Ascending aorta (tissue), 2 donors: ENCODE measurements at regions of chr2 and their contacts with region 1.

Region 1: DNA sequence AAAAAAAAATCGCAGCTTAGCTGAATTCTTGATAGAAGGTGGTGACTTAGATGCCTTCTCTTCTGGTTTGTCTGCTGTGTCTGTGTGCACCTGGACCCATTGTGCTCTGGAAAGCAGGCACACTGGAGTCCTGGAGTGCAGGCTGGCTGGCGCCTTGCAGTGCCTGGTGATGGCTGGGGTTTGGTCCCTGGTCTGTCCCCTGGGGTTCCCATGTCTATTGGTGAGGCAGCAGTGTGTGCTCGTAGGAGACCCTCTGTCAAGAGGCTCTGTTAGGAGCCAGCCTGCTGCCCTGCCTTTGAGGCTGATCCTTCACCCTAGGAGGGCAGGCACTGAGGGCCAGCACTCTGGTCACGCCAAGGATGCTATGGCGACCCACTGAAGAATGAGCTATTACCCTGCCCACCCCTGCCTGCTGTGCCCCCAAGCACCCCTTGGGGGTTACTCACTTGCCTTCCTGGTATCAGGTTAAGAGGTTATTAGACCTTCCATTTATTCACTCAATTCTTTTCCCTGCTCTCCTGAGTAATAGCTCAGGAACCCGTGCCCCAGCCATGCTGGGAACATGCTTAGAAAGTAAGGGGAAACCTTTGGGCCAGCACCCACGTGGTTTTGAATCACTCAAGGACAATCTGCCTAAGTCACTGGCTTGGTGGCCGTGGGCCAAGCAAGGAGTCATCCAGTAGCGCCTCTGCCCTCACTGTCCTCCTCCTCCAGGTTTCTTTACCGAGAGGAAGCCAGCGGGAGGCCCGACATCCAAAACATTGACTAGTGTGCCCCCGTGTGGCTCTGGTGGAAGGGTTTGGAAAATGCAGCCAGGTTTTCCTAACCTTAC is 284.5 kb downstream of the PRKCE start:
- DNase-seq: peak; percentile 89 to 98
- H3K4me3 ChIP-seq: no peak overlapping the region
- H3K27ac ChIP-seq: no peak overlapping the region
- H3K4me1 ChIP-seq: peaks cover 4 to 10% of the 10 kb centered on the region in 2 donors
- H3K27me3 ChIP-seq: no peaks in the 10 kb centered on the region
- CTCF ChIP-seq: peak; percentile 67 to 83 (median 77)

Region 2: DNA sequence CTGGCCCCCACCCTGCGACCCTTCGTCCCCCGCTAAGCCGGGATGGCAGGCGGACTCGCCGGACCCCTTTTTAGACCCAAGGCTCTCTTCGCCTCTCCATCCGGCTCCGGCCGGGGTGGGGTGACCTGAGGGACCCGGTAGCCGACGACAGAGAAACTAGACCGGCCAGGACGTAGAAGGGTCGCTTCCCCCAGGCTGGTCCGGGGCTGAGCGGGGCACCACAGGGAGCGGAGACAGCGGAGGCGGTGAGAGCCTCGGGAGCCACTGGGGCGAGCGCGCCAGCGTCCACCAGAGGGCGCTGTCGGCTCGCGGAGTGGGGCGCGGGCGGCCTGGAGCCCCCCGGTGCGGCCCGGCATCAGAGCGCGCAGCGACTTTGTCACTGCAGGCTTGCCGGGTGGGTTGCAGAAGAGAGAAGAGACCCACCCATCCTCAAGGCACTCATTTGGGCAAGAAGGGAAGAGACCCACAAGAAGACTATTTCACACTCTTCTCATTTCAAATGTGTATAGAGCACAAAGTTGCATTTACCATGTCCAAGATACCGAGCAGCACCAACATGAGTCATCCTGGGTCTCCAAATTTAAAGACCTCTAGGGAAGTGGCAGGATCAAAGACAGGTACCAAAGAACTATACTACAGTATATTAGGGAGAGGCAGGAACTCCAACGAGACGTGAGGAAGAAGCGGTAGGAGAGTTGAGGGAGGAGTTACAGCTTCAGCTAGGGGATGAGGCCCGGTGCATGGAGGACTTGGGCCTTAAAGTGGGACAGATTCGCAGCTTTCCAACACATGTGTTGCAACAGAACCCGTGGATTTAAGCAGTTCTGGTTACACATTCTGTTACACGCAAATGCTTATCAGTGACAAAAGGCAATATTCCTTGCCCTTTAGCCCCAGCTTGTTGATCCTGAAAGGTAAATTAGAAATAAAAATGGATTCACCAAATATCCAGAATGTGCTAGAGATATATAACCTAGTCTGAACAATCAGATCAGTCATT is 292.2 kb before region 1 on chr2:
- intact Hi-C with region 1: loop called (anchors 1 kb)
- DNase-seq: peak in 1 of 2 donors; percentile 76
- H3K4me3 ChIP-seq: peak overlapping the region; percentile 57 to 63
- H3K27ac ChIP-seq: no peak overlapping the region
- H3K4me1 ChIP-seq: peaks cover 0 to 3% of the 10 kb centered on the region in 2 donors
- H3K27me3 ChIP-seq: no peaks in the 10 kb centered on the region
- CTCF ChIP-seq: peak; percentile 94 to 100 (median 98)

Region 3: GRCh38 chr2:45778720-45779171 is 157.3 kb before region 1 on chr2:
- intact Hi-C with region 1: loop called (anchors 2 kb)
- DNase-seq: peak in 1 of 2 donors; percentile 74
- H3K4me3 ChIP-seq: no peak overlapping the region
- H3K27ac ChIP-seq: no peak overlapping the region
- H3K4me1 ChIP-seq: no peaks in the 10 kb centered on the region
- H3K27me3 ChIP-seq: no peaks in the 10 kb centered on the region
- CTCF ChIP-seq: peak; percentile 53 to 85 (median 76)

Region 4: DNA sequence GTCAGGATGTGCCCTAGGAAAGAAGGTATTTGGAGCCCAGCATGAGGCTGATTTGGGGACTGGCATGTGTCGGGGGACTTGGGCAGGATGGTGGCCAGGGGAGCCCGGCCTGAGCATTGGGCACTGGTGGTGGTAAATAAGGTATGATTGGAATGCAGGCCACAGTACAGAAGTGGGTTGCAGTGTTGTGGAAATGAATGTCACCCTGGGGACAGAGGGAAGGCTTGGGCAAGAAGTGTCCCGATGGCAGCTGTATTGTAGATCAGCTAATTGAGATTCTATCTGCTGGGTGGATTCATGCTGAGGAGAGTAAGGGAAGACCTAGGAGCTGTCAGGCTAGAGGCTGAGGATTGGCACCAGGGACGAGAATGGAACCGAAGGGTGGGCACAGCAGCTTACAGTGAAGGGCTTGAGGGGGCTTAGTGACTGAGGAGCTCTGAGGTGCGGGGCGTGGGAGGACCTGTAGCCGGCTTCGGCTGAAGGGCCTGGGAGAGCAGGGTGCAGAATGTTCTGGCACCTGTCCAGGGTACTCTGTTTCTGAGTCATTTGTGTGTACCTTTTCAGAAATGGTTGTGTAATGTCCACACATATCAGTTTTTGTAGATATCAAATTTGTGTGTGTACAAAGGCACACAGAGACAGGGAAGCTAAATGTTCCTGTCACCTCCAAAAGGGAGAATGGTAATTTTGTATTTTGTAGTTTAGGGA is 114.3 kb before region 1 on chr2:
- intact Hi-C with region 1: loop called (anchors 1 kb)
- DNase-seq: peak; percentile 13 to 77
- H3K4me3 ChIP-seq: no peak overlapping the region
- H3K27ac ChIP-seq: peak overlapping the region; percentile 35 to 83
- H3K4me1 ChIP-seq: peaks cover 22 to 37% of the 10 kb centered on the region in 2 donors
- H3K27me3 ChIP-seq: no peaks in the 10 kb centered on the region
- CTCF ChIP-seq: no peak

Region 5: DNA sequence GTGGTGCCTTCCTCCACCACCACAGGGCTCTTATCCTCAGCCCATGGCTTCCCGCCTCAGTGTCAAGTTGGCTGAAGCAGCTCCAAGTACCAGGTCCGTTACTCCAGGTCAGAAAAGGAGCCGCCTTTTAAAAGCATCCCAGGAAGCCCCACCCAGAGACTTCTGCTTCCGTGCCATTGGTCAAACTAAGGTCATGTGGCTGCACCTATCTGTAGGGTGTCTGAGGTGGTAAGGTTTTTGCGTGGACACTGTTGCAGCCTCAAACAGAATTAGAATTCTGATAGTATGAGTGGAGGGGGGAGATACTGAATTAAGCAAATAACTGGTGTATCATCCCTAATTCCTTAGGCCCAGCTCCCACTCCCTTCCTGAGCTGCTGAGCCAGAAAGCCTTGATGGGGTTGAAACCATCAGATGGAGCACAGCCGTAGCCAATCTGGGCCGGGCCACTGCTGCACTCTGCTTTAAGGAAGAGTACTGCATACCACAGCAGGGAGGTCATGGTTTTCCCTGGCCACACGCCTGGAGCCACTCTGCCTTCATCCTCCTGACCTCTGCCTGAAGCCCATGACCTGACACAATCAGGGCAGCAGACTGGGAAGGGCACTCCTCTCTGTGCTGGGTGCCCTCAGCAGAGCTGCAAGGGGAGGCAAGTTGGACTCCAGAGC is 551.8 kb after region 1 on chr2:
- intact Hi-C with region 1: no loop called
- DNase-seq: peak in 1 of 2 donors; percentile 86
- H3K4me3 ChIP-seq: no peak overlapping the region
- H3K27ac ChIP-seq: peak overlapping the region; percentile 64 to 67
- H3K4me1 ChIP-seq: peaks cover 3 to 24% of the 10 kb centered on the region in 2 donors
- H3K27me3 ChIP-seq: no peaks in the 10 kb centered on the region
- CTCF ChIP-seq: no peak